ENCODE measurements at regions of chr6 and their contacts with region 1.

Region 1: GRCh38 chr6:34027445-34027936 is 118.4 kb downstream of the GRM4 start:
- DNase-seq: peak; percentile 50 to 75 (median 61)
- H3K4me3 ChIP-seq: no peak overlapping the region
- H3K4me3 Mint-ChIP-seq: no peak overlapping the region
- H3K27ac ChIP-seq: no peak overlapping the region
- H3K27ac Mint-ChIP-seq: no peak overlapping the region
- H3K4me1 ChIP-seq: no peaks in the 10 kb centered on the region
- H3K4me1 Mint-ChIP-seq: no peaks in the 10 kb centered on the region
- H3K27me3 ChIP-seq: no peaks in the 10 kb centered on the region
- H3K27me3 Mint-ChIP-seq: peaks cover 1 to 6% of the 10 kb centered on the region in 2 donors

Region 2: DNA sequence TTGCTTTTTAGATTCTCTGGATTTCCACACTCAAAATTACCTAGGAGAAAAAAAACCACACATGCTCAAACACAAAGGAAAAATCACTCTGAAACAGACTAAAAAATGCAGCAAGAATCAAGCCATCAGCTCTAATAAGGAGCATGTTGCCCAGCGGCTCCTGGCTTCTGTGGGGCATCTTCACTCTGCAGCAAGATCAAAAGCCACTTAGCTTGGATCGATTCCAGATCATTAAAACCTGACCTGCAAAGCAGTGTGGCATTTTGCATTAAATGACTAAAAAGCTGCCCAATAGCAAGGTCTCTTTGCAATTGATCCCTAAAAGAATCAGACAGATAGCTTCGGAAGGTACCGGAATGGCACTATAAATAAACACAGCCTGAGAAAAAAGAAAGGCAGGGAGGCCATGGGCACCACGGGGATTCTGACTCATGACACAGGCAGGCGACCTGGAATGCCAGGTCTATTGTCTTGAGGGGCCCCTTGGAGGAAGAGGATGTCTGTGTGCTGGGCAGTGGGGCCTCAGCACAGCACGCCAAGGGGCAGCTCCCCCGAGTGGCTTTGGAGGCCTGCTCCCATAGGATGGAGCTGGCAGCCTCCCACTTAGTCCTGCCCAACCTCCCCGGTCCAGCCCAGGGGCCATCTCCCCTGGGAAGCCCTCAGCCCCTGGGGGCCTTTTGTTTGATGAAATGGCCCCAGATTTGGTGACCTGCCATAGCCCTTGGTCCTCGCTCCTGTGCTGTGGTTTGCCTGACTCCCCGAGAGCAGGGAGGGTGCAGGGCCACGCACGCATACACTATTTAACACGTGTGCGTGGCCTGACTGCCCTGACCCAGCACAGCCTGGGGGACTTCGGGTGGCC is 246.1 kb before region 1 on chr6:
- CTCF ChIA-PET with region 1: interaction called, 13 read pairs
- POLR2A ChIA-PET with region 1: no interaction called
- DNase-seq: no peak
- H3K4me3 ChIP-seq: no peak overlapping the region
- H3K4me3 Mint-ChIP-seq: peak overlapping the region in 1 of 7 donors; percentile 61
- H3K27ac ChIP-seq: no peak overlapping the region
- H3K27ac Mint-ChIP-seq: no peak overlapping the region
- H3K4me1 ChIP-seq: peaks cover 16% of the 10 kb centered on the region
- H3K4me1 Mint-ChIP-seq: peaks cover 39 to 42% (median 41%) of the 10 kb centered on the region in 3 donors
- H3K27me3 ChIP-seq: no peaks in the 10 kb centered on the region
- H3K27me3 Mint-ChIP-seq: no peaks in the 10 kb centered on the region

Region 3: GRCh38 chr6:33850869-33851541 is 176.5 kb before region 1 on chr6:
- CTCF ChIA-PET with region 1: interaction called, 11 read pairs
- POLR2A ChIA-PET with region 1: no interaction called
- DNase-seq: no peak
- H3K4me3 ChIP-seq: no peak overlapping the region
- H3K4me3 Mint-ChIP-seq: no peak overlapping the region
- H3K27ac ChIP-seq: no peak overlapping the region
- H3K27ac Mint-ChIP-seq: no peak overlapping the region
- H3K4me1 ChIP-seq: peaks cover 7% of the 10 kb centered on the region
- H3K4me1 Mint-ChIP-seq: peaks cover 11 to 13% (median 11%) of the 10 kb centered on the region in 3 donors
- H3K27me3 ChIP-seq: peaks cover 17% of the 10 kb centered on the region
- H3K27me3 Mint-ChIP-seq: peaks cover 22 to 35% of the 10 kb centered on the region in 2 donors